ENCODE measurements at regions of chr17 and their contacts with region 1.

Region 1: GRCh38 chr17:32783602-32784001 is 93.3 kb downstream of the MYO1D start:
- DNase-seq: peak; percentile 39
- ATAC-seq: peak; percentile 59; the same call in 1 of the 2 replicates
- H3K4me3 ChIP-seq: no peak overlapping the region
- H3K27ac ChIP-seq: no peak overlapping the region
- H3K4me1 ChIP-seq: no peaks in the 10 kb centered on the region
- H3K27me3 ChIP-seq: no peaks in the 10 kb centered on the region
- CTCF ChIP-seq: peak; percentile 47 to 86 (median 75)
- POLR2A ChIP-seq: no peak
- RAD21 ChIP-seq: peak; percentile 84

Region 2: GRCh38 chr17:32877164-32877764 is 93.7 kb after region 1 on chr17:
- CTCF ChIA-PET with region 1: interaction called, 73 read pairs
- POLR2A ChIA-PET with region 1: interaction called, 3 read pairs
- RAD21 ChIA-PET with region 1: interaction called, 3 to 4 read pairs
- intact Hi-C with region 1: loop called (anchors 1 kb)
- DNase-seq: peak; percentile 65
- ATAC-seq: peak; percentile 94
- H3K4me3 ChIP-seq: peak overlapping the region; percentile 58 to 72
- H3K27ac ChIP-seq: peak overlapping the region; percentile 97; the same call in 1 of the 2 replicates
- H3K4me1 ChIP-seq: peaks cover 8 to 15% of the 10 kb centered on the region in 2 experiments; a peak in 3 of 4 replicates
- H3K27me3 ChIP-seq: no peaks in the 10 kb centered on the region
- CTCF ChIP-seq: peak; percentile 63 to 82 (median 76)
- POLR2A ChIP-seq: no peak
- RAD21 ChIP-seq: peak; percentile 55

Region 3: GRCh38 chr17:32936894-32937500 is 153.4 kb after region 1 on chr17:
- CTCF ChIA-PET with region 1: interaction called, 13 read pairs
- POLR2A ChIA-PET with region 1: no interaction called
- RAD21 ChIA-PET with region 1: no interaction called
- intact Hi-C with region 1: loop called (anchors 1 kb)
- DNase-seq: peak; percentile 45
- ATAC-seq: peak; percentile 97
- H3K4me3 ChIP-seq: no peak overlapping the region
- H3K27ac ChIP-seq: no peak overlapping the region; the same call in 1 of the 2 replicates
- H3K4me1 ChIP-seq: peaks cover 0 to 9% of the 10 kb centered on the region in 2 experiments; a peak in 3 of 4 replicates
- H3K27me3 ChIP-seq: no peaks in the 10 kb centered on the region
- CTCF ChIP-seq: peak; percentile 50 to 88 (median 78); a peak in 5 of 6 replicates
- POLR2A ChIP-seq: no peak
- RAD21 ChIP-seq: peak; percentile 48

Region 4: DNA sequence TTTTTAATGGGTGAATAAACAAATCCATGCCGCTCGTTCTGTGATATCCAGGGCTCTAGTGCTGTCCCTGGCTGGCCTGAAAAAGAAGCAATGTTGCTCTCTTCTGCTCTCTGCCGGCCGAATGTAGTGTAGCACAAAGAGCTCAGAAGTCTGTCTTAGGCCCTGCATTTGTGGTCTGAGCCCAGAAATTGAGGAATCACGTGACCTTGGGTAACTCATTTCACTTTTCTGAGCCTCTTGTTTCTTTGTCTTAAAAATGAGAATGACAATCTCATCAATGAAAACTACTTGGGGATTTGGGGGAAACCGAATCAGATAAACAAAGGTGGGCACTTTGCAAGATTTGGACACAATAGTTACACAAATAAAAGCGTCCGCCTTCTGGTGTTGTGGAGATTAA is 891.1 kb after region 1 on chr17:
- CTCF ChIA-PET with region 1: no interaction called
- POLR2A ChIA-PET with region 1: no interaction called
- RAD21 ChIA-PET with region 1: no interaction called
- intact Hi-C with region 1: loop called (anchors 10 kb)
- DNase-seq: peak; percentile 1
- ATAC-seq: peak; percentile 58; the same call in 1 of the 2 replicates
- H3K4me3 ChIP-seq: no peak overlapping the region
- H3K27ac ChIP-seq: no peak overlapping the region
- H3K4me1 ChIP-seq: no peaks in the 10 kb centered on the region
- H3K27me3 ChIP-seq: no peaks in the 10 kb centered on the region
- CTCF ChIP-seq: peak in 2 of 3 experiments; percentile 49 to 58; a peak in 4 of 6 replicates
- POLR2A ChIP-seq: no peak
- RAD21 ChIP-seq: 0 out of 2 replicates have a peak, but pooled peaks have one; percentile 17